Endothelial cell of umbilical vein (primary cell): ENCODE measurements at regions of chr3 and their contacts with region 1.

Region 1: GRCh38 chr3:188362405-188362831 is 208.5 kb downstream of the LPP start:
- DNase-seq: peak; percentile 84
- H3K4me3 ChIP-seq: no peak overlapping the region
- H3K27ac ChIP-seq: peak overlapping the region; percentile 66
- H3K4me1 ChIP-seq: peaks cover 36% of the 10 kb centered on the region
- H3K27me3 ChIP-seq: no peaks in the 10 kb centered on the region
- CTCF ChIP-seq: no peak
- POLR2A ChIP-seq: no peak

Region 2: GRCh38 chr3:188294823-188295487 is 67.5 kb before region 1 on chr3:
- CTCF ChIA-PET with region 1: interaction called, 3 read pairs
- POLR2A ChIA-PET with region 1: no interaction called
- dilution Hi-C with region 1: no loop called
- intact Hi-C with region 1: loop called (anchors 1 kb)
- DNase-seq: peak; percentile 95
- H3K4me3 ChIP-seq: no peak overlapping the region
- H3K27ac ChIP-seq: peak overlapping the region; percentile 63
- H3K4me1 ChIP-seq: peaks cover 49% of the 10 kb centered on the region
- H3K27me3 ChIP-seq: no peaks in the 10 kb centered on the region
- CTCF ChIP-seq: no peak
- POLR2A ChIP-seq: no peak

Region 3: DNA sequence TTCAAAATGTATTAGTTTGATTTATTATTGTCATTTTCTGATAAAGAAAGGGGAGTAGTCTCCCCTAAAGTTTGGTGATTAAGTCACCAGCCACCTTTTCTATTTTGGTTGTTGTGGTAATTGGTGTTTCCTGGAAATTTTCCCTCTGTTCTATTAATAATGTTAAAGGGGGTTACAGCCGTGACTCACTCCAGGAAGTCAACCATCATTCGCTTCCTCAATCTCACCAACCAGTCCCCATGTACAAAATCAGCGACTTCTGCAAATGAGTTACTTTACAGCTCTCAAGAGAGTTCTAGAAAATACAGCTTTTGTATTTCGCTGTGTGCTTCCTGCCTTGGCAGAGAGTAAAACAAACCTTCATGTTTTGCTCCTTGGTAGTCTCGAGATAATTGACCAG is 76.7 kb after region 1 on chr3:
- CTCF ChIA-PET with region 1: no interaction called
- POLR2A ChIA-PET with region 1: no interaction called
- dilution Hi-C with region 1: no loop called
- intact Hi-C with region 1: loop called (anchors 1 kb)
- DNase-seq: peak; percentile 85
- H3K4me3 ChIP-seq: no peak overlapping the region
- H3K27ac ChIP-seq: peak overlapping the region; percentile 86
- H3K4me1 ChIP-seq: peaks cover 36% of the 10 kb centered on the region
- H3K27me3 ChIP-seq: no peaks in the 10 kb centered on the region
- CTCF ChIP-seq: no peak
- POLR2A ChIP-seq: no peak

Region 4: GRCh38 chr3:188531210-188531609 is 168.8 kb after region 1 on chr3:
- CTCF ChIA-PET with region 1: no interaction called
- POLR2A ChIA-PET with region 1: no interaction called
- dilution Hi-C with region 1: no loop called
- intact Hi-C with region 1: loop called (anchors 2 kb)
- DNase-seq: peak; percentile 87
- H3K4me3 ChIP-seq: no peak overlapping the region
- H3K27ac ChIP-seq: peak overlapping the region; percentile 85
- H3K4me1 ChIP-seq: peaks cover 37% of the 10 kb centered on the region
- H3K27me3 ChIP-seq: no peaks in the 10 kb centered on the region
- CTCF ChIP-seq: no peak
- POLR2A ChIP-seq: no peak

Region 5: DNA sequence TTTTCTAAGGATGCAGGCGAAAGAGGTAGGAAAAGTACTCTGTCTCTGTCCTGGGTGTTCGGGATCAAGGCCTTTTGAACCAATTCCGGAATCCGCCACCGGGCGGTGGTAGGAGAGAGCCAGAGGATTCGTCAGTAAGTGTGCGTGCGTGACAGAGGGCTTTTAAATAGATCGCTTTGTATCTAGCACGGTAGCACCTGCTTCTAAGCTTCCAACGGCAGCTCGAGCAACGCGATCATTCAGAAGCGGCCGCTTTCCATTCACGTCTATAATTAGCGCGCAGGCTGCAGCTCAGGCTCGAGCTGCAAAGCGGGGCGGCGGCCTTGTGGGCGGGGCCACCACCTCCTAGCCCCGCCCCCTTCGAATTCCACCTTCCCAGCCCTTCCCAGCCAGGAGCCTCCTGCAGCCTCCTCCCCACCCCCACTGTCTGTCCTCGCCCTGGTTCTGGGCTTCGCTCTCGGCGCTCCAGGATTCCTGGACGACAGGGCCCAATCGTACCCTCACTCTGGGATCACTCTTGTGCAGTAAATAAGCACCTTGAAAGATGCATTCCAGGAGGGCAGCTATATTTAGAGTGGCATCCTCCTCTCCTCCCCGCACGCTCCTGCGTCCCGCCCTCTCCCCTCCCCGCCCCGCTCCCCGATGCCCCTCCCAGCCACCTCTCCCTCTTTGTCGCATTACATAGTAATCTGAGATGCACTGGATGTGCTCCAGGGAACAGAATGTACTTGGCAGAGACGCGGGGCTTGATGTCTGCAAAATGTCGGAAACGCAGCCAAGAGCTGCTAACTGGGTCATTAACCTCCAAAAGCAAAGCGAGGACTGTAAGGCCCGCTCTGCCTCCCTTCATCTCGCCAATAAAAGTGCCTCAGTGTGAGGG is 585.2 kb after region 1 on chr3:
- CTCF ChIA-PET with region 1: no interaction called
- POLR2A ChIA-PET with region 1: no interaction called
- dilution Hi-C with region 1: no loop called
- intact Hi-C with region 1: loop called (anchors 2 kb)
- DNase-seq: peak; percentile 84
- H3K4me3 ChIP-seq: peak overlapping the region in 2 of 3 experiments; percentile 27 to 32
- H3K27ac ChIP-seq: peak overlapping the region; percentile 97
- H3K4me1 ChIP-seq: peaks cover 45% of the 10 kb centered on the region
- H3K27me3 ChIP-seq: no peaks in the 10 kb centered on the region
- CTCF ChIP-seq: peak; percentile 19 to 29
- POLR2A ChIP-seq: no peak

Region 6: DNA sequence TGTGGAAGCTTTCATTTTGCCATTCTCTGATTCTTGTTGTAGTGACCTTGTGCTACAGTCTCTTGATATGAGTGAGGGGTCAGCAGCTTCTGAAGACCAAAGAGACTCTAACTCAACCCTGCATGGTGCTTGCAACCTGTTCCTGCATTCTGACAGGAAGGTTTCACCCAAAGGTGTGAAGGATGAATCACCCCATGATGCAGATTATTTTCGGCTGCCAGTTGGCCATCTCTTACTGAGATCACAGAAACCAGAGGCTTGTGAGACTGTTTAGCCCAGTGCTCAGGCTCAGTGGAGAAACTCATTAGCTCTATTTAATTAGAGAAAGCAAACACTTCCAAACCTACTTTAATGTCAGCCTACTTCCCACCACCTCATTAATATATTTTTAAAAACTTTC is 780.1 kb after region 1 on chr3:
- CTCF ChIA-PET with region 1: no interaction called
- POLR2A ChIA-PET with region 1: no interaction called
- dilution Hi-C with region 1: no loop called
- intact Hi-C with region 1: no loop called
- DNase-seq: no peak
- H3K4me3 ChIP-seq: no peak overlapping the region
- H3K27ac ChIP-seq: no peak overlapping the region
- H3K4me1 ChIP-seq: no peaks in the 10 kb centered on the region
- H3K27me3 ChIP-seq: peaks cover 11 to 13% of the 10 kb centered on the region in 2 experiments
- CTCF ChIP-seq: no peak
- POLR2A ChIP-seq: no peak